Endothelial cell of umbilical vein (primary cell): ENCODE measurements at regions of chr2 and their contacts with region 1.

Region 1: GRCh38 chr2:141021109-141021508 is 1109.7 kb downstream of the LRP1B start:
- DNase-seq: peak; percentile 88
- H3K4me3 ChIP-seq: no peak overlapping the region
- H3K27ac ChIP-seq: peak overlapping the region; percentile 90
- H3K4me1 ChIP-seq: peaks cover 29% of the 10 kb centered on the region
- H3K27me3 ChIP-seq: no peaks in the 10 kb centered on the region
- CTCF ChIP-seq: no peak
- POLR2A ChIP-seq: no peak

Region 2: DNA sequence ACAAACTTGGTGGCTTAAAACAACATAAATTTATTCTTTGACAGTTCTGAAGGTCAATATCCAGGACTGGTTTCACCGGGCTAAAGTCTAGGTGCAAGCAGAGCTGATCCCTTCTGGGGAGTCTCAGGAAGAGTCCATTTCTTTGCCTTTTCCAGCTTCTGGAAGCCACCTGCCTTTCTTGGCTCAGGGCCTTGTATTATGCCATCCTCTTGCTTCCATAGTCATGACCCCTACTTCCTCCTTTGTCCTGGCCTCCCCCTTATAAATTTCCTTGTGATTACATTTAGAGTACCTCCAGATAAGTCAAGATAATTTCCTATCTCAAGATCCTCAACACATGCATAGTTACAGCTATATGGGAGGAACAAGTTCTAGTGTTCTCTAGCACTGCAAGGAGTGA is 20.2 kb after region 1 on chr2:
- CTCF ChIA-PET with region 1: interaction called, 4 read pairs
- POLR2A ChIA-PET with region 1: interaction called, 3 read pairs
- dilution Hi-C with region 1: no loop called
- intact Hi-C with region 1: loop called (anchors 1 kb)
- DNase-seq: peak; percentile 78
- H3K4me3 ChIP-seq: no peak overlapping the region
- H3K27ac ChIP-seq: peak overlapping the region; percentile 14
- H3K4me1 ChIP-seq: peaks cover 12% of the 10 kb centered on the region
- H3K27me3 ChIP-seq: no peaks in the 10 kb centered on the region
- CTCF ChIP-seq: no peak
- POLR2A ChIP-seq: no peak

Region 3: GRCh38 chr2:141137122-141137693 is 116.1 kb after region 1 on chr2:
- CTCF ChIA-PET with region 1: no interaction called
- POLR2A ChIA-PET with region 1: no interaction called
- dilution Hi-C with region 1: no loop called
- intact Hi-C with region 1: no loop called
- DNase-seq: peak; percentile 2
- H3K4me3 ChIP-seq: no peak overlapping the region
- H3K27ac ChIP-seq: no peak overlapping the region
- H3K4me1 ChIP-seq: no peaks in the 10 kb centered on the region
- H3K27me3 ChIP-seq: no peaks in the 10 kb centered on the region
- CTCF ChIP-seq: no peak
- POLR2A ChIP-seq: no peak

Region 4: GRCh38 chr2:141341444-141341843 is 320.3 kb after region 1 on chr2:
- CTCF ChIA-PET with region 1: no interaction called
- POLR2A ChIA-PET with region 1: no interaction called
- dilution Hi-C with region 1: no loop called
- intact Hi-C with region 1: loop called (anchors 2 kb)
- DNase-seq: peak; percentile 74
- H3K4me3 ChIP-seq: no peak overlapping the region
- H3K27ac ChIP-seq: no peak overlapping the region
- H3K4me1 ChIP-seq: peaks cover 3% of the 10 kb centered on the region
- H3K27me3 ChIP-seq: no peaks in the 10 kb centered on the region
- CTCF ChIP-seq: no peak
- POLR2A ChIP-seq: no peak

Region 5: DNA sequence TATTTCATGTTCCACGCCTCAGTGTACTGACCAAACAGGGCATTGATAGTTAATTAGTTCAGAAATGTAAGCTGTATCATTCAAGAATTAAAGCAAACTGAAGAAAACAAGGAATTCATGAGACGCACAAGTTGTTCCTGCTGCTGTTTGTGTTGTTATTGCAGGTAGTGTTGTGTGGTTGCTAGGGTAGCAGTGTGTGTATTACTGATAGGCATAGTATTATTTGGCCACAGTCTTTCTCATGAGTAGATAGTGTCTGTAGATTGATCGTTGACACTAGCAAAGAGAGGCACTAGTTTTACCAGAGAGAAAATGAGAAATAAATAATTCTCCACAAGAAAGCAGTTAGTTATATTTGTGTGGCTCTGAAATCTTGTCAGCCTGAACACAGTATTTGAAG is 561.1 kb after region 1 on chr2:
- CTCF ChIA-PET with region 1: no interaction called
- POLR2A ChIA-PET with region 1: no interaction called
- dilution Hi-C with region 1: no loop called
- intact Hi-C with region 1: no loop called
- DNase-seq: no peak
- H3K4me3 ChIP-seq: no peak overlapping the region
- H3K27ac ChIP-seq: no peak overlapping the region
- H3K4me1 ChIP-seq: no peaks in the 10 kb centered on the region
- H3K27me3 ChIP-seq: no peaks in the 10 kb centered on the region
- CTCF ChIP-seq: no peak
- POLR2A ChIP-seq: no peak

Region 6: DNA sequence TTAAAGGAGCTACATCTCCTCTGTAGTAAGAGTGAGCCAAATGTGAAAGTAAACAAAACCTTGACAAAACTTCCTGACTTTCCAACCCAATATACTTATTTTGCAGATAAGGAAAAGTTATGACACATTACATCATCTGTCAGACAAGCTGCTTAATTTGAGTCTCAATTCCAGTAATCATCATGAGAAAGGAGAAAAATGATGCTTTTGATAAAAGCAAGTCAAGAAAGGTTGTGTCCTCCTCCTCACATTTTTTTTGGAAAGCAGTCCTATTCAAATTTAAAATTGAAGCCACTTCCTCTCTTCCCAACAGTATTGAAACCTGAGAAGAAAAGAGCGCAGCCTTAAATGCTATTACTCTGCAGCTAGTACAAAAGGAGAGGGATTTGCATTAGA is 590.1 kb after region 1 on chr2:
- CTCF ChIA-PET with region 1: no interaction called
- POLR2A ChIA-PET with region 1: no interaction called
- dilution Hi-C with region 1: no loop called
- intact Hi-C with region 1: loop called (anchors 1 kb)
- DNase-seq: peak; percentile 87
- H3K4me3 ChIP-seq: peak overlapping the region in 2 of 3 experiments; percentile 15 to 54
- H3K27ac ChIP-seq: peak overlapping the region; percentile 73
- H3K4me1 ChIP-seq: peaks cover 20% of the 10 kb centered on the region
- H3K27me3 ChIP-seq: no peaks in the 10 kb centered on the region
- CTCF ChIP-seq: no peak
- POLR2A ChIP-seq: no peak

Region 7: GRCh38 chr2:142849816-142850215 is 1828.7 kb after region 1 on chr2:
- CTCF ChIA-PET with region 1: no interaction called
- POLR2A ChIA-PET with region 1: no interaction called
- dilution Hi-C with region 1: no loop called
- intact Hi-C with region 1: loop called (anchors 10 kb)
- DNase-seq: peak; percentile 7
- H3K4me3 ChIP-seq: no peak overlapping the region
- H3K27ac ChIP-seq: no peak overlapping the region
- H3K4me1 ChIP-seq: peaks cover 4% of the 10 kb centered on the region
- H3K27me3 ChIP-seq: peaks cover 0 to 1% of the 10 kb centered on the region in 2 experiments
- CTCF ChIP-seq: no peak
- POLR2A ChIP-seq: no peak